Heart left ventricle (tissue), 16 donors: ENCODE measurements at regions of chr3 and their contacts with region 1.

Region 1: GRCh38 chr3:37461485-37462000 is 287.2 kb upstream of the LRRFIP2 start:
- DNase-seq: no peak
- ATAC-seq: no peak
- H3K4me3 ChIP-seq: no peak overlapping the region
- H3K27ac ChIP-seq: peak overlapping the region in 2 of 12 donors; percentile 4 to 9
- H3K4me1 ChIP-seq: peaks cover 15 to 73% (median 40%) of the 10 kb centered on the region in 12 donors
- H3K27me3 ChIP-seq: no peaks in the 10 kb centered on the region
- CTCF ChIP-seq: no peak
- POLR2A ChIP-seq: no peak

Region 2: DNA sequence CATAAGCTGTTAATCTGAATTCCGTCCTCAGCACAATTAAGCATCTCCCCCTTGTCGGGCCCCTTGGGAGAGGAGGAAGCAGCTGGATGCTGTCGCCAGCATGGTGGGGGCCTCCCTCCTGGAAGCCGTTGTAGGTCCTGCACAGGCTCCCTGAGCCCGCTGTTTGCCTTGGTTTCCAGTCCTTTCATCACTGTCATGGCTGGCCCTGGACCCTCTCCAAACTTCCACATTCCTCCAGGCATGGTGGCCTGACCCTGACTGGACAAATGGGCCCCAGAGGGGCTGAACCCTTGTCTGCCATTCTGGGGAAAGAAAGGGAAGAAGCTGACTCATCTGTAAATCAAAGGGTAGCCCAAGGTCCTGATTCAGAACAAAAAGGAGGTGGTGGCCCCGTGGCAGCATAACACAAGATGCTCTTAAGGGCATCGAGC is 13.4 kb after region 1 on chr3:
- intact Hi-C with region 1: loop called in 2 of 10 experiments (anchors 1 to 2 kb)
- DNase-seq: no peak
- ATAC-seq: peak in 2 of 4 donors; percentile 11 to 28
- H3K4me3 ChIP-seq: no peak overlapping the region
- H3K27ac ChIP-seq: peak overlapping the region in 1 of 12 donors; percentile 9
- H3K4me1 ChIP-seq: peaks cover 0 to 26% (median under 1%) of the 10 kb centered on the region in 12 donors
- H3K27me3 ChIP-seq: no peaks in the 10 kb centered on the region
- CTCF ChIP-seq: no peak
- POLR2A ChIP-seq: no peak